B cell (primary cell): ENCODE measurements at regions of chr3 and their contacts with region 1.

Region 1: DNA sequence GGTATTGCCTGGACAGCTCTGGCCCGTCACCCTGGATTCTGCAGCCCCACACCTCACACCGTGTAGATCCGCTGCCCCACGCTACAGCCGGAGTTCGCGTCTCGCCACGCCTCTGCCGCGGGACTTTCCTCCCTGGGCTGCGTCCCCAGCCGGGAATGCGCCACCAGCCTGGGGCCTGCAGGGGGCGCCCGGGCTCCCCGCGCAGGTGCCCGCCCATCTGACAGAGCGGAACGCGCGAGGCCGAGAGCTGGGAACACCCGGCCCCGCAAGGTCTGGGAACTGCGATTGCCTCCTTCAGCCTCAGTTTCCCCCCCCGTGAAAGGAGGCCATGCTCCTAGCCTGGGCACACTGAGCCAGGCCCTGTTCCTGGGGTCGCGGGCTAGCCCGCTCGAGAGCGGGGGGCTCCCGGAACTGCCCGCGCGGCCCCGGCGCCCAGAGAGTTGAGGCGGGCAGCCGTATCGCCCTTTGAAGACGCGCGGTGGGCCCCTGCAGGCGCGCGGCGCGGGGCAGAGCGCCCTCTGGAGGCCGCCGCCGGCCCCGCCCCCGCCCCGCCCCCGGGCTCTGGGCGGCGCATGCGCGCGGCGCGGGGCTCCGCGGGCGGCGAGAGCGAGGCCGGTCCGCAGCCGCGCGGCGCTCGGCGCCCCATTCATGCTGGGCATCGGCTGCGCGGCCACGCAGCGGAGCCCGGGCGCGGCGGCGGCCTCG is at the start of gene PLXNA1:
- DNase-seq: peak; percentile 96
- ATAC-seq: peak; percentile 73
- H3K4me3 ChIP-seq: peak within 1 kb of the TSS in 4 of 5 experiments; percentile 56 to 74 (median 64)
- H3K4me3 Mint-ChIP-seq: peak within 1 kb of the TSS; percentile 97
- H3K27ac ChIP-seq: peak within 1 kb of the TSS; percentile 97
- H3K27ac Mint-ChIP-seq: peak within 1 kb of the TSS; percentile 97
- H3K4me1 ChIP-seq: peaks cover 17 to 24% of the 10 kb centered on the region in 2 donors
- H3K4me1 Mint-ChIP-seq: peaks cover 19% of the 10 kb centered on the region
- H3K27me3 ChIP-seq: peaks cover 0 to 33% (median 9%) of the 10 kb centered on the region in 4 experiments
- H3K27me3 Mint-ChIP-seq: peaks cover 13% of the 10 kb centered on the region
- CTCF ChIP-seq: peak; percentile 96
- total RNA-seq, gene PLXNA1: 22.3 and 24.2 TPM in 2 replicates

Region 2: GRCh38 chr3:126357295-126358037 is 625.2 kb before region 1 on chr3 and contains the start of gene KLF15:
- CTCF ChIA-PET with region 1: no interaction called
- POLR2A ChIA-PET with region 1: no interaction called
- intact Hi-C with region 1: loop called (anchors 5 kb)
- DNase-seq: peak; percentile 85
- ATAC-seq: peak; percentile 93
- H3K4me3 ChIP-seq: peak within 1 kb of the TSS; percentile 12 to 84 (median 59)
- H3K4me3 Mint-ChIP-seq: peak within 1 kb of the TSS; percentile 95
- H3K27ac ChIP-seq: no peak within 1 kb of the TSS
- H3K27ac Mint-ChIP-seq: peak within 1 kb of the TSS; percentile 81
- H3K4me1 ChIP-seq: peaks cover 20 to 21% of the 10 kb centered on the region in 2 donors
- H3K4me1 Mint-ChIP-seq: peaks cover 16% of the 10 kb centered on the region
- H3K27me3 ChIP-seq: peaks cover 0 to 54% (median 22%) of the 10 kb centered on the region in 4 experiments
- H3K27me3 Mint-ChIP-seq: peaks cover 50% of the 10 kb centered on the region
- CTCF ChIP-seq: no peak
- total RNA-seq, gene KLF15: 0.83 and 2.2 TPM in 2 replicates

Region 3: GRCh38 chr3:126703512-126704462 is 278.8 kb before region 1 on chr3 and contains the start of gene CHCHD6:
- CTCF ChIA-PET with region 1: no interaction called
- POLR2A ChIA-PET with region 1: no interaction called
- intact Hi-C with region 1: loop called (anchors 1 kb)
- DNase-seq: peak; percentile 97
- ATAC-seq: peak; percentile 96
- H3K4me3 ChIP-seq: peak within 1 kb of the TSS in 4 of 5 experiments; percentile 61 to 79 (median 75)
- H3K4me3 Mint-ChIP-seq: peak within 1 kb of the TSS; percentile 92
- H3K27ac ChIP-seq: peak within 1 kb of the TSS in 1 of 2 donors; percentile 11
- H3K27ac Mint-ChIP-seq: peak within 1 kb of the TSS; percentile 78
- H3K4me1 ChIP-seq: peaks cover 11 to 15% of the 10 kb centered on the region in 2 donors
- H3K4me1 Mint-ChIP-seq: peaks cover 17% of the 10 kb centered on the region
- H3K27me3 ChIP-seq: peaks cover 0 to 9% (median 4%) of the 10 kb centered on the region in 4 experiments
- H3K27me3 Mint-ChIP-seq: peaks cover 36% of the 10 kb centered on the region
- CTCF ChIP-seq: no peak
- total RNA-seq, gene CHCHD6: 13.5 TPM in 2 replicates

Region 4: GRCh38 chr3:126911162-126912026 is 71.2 kb before region 1 on chr3:
- CTCF ChIA-PET with region 1: interaction called, 17 read pairs
- POLR2A ChIA-PET with region 1: interaction called, 7 read pairs
- intact Hi-C with region 1: loop called (anchors 1 kb)
- DNase-seq: peak; percentile 91
- ATAC-seq: peak; percentile 95
- H3K4me3 ChIP-seq: peak overlapping the region in 2 of 5 experiments; percentile 7 to 42
- H3K4me3 Mint-ChIP-seq: peak overlapping the region; percentile 71
- H3K27ac ChIP-seq: peak overlapping the region in 1 of 2 donors; percentile 41
- H3K27ac Mint-ChIP-seq: peak overlapping the region; percentile 75
- H3K4me1 ChIP-seq: peaks cover 23 to 31% of the 10 kb centered on the region in 2 donors
- H3K4me1 Mint-ChIP-seq: peaks cover 38% of the 10 kb centered on the region
- H3K27me3 ChIP-seq: peaks cover 0 to 64% (median 18%) of the 10 kb centered on the region in 4 experiments
- H3K27me3 Mint-ChIP-seq: peaks cover 49% of the 10 kb centered on the region
- CTCF ChIP-seq: no peak

Region 5: GRCh38 chr3:126971891-126972351 is 10.7 kb before region 1 on chr3:
- CTCF ChIA-PET with region 1: interaction called, 10 read pairs
- POLR2A ChIA-PET with region 1: interaction called, 4 read pairs
- intact Hi-C with region 1: no loop called
- DNase-seq: peak; percentile 50
- ATAC-seq: peak; percentile 72
- H3K4me3 ChIP-seq: no peak overlapping the region
- H3K4me3 Mint-ChIP-seq: peak overlapping the region; percentile 30
- H3K27ac ChIP-seq: no peak overlapping the region
- H3K27ac Mint-ChIP-seq: peak overlapping the region; percentile 56
- H3K4me1 ChIP-seq: peaks cover 3 to 4% of the 10 kb centered on the region in 2 donors
- H3K4me1 Mint-ChIP-seq: peaks cover 18% of the 10 kb centered on the region
- H3K27me3 ChIP-seq: peaks cover 0 to 16% (median 0%) of the 10 kb centered on the region in 4 experiments
- H3K27me3 Mint-ChIP-seq: peaks cover 34% of the 10 kb centered on the region
- CTCF ChIP-seq: no peak

Region 6: GRCh38 chr3:127089486-127090145 is 107.0 kb after region 1 on chr3:
- CTCF ChIA-PET with region 1: no interaction called
- POLR2A ChIA-PET with region 1: no interaction called
- intact Hi-C with region 1: no loop called
- DNase-seq: no peak
- ATAC-seq: no peak
- H3K4me3 ChIP-seq: no peak overlapping the region
- H3K4me3 Mint-ChIP-seq: no peak overlapping the region
- H3K27ac ChIP-seq: no peak overlapping the region
- H3K27ac Mint-ChIP-seq: no peak overlapping the region
- H3K4me1 ChIP-seq: no peaks in the 10 kb centered on the region
- H3K4me1 Mint-ChIP-seq: no peaks in the 10 kb centered on the region
- H3K27me3 ChIP-seq: peaks cover 0 to 9% (median 0%) of the 10 kb centered on the region in 4 experiments
- H3K27me3 Mint-ChIP-seq: peaks cover 24% of the 10 kb centered on the region
- CTCF ChIP-seq: no peak

Region 7: DNA sequence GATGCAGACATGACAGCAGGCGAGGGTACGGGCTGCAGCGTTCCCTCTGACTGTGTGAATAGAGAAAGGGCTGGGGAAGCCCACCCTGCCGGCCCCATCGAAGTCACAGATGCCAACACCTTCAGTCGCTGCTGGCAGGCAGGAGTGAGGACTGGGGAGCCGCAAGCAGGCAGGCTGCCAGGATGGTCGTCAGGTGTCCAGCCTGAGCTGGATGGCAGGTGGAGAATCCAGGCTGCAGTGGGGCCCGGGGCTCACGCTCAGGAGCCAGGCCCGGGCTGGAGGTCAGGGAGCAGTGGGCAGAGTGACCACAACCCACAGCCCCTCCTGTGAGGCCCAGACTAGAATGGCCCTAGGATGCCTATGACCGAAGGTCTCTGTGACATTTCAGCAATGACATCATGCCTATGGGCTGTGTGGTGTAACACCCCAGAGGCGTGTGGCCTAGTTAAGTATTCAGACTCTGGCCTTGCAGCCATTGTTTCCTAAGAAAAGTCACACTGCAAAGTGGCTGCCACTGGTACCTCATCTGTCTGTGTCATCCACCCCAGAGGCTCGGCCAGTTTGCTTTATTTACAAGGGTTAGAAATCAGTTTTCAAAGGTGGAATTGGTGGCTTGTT is 226.0 kb after region 1 on chr3:
- CTCF ChIA-PET with region 1: no interaction called
- POLR2A ChIA-PET with region 1: no interaction called
- intact Hi-C with region 1: no loop called
- DNase-seq: no peak
- ATAC-seq: no peak
- H3K4me3 ChIP-seq: no peak overlapping the region
- H3K4me3 Mint-ChIP-seq: no peak overlapping the region
- H3K27ac ChIP-seq: no peak overlapping the region
- H3K27ac Mint-ChIP-seq: no peak overlapping the region
- H3K4me1 ChIP-seq: no peaks in the 10 kb centered on the region
- H3K4me1 Mint-ChIP-seq: no peaks in the 10 kb centered on the region
- H3K27me3 ChIP-seq: no peaks in the 10 kb centered on the region
- H3K27me3 Mint-ChIP-seq: peaks cover 17% of the 10 kb centered on the region
- CTCF ChIP-seq: no peak